ENCODE measurements at regions of chr2 and their contacts with region 1.

Region 1: DNA sequence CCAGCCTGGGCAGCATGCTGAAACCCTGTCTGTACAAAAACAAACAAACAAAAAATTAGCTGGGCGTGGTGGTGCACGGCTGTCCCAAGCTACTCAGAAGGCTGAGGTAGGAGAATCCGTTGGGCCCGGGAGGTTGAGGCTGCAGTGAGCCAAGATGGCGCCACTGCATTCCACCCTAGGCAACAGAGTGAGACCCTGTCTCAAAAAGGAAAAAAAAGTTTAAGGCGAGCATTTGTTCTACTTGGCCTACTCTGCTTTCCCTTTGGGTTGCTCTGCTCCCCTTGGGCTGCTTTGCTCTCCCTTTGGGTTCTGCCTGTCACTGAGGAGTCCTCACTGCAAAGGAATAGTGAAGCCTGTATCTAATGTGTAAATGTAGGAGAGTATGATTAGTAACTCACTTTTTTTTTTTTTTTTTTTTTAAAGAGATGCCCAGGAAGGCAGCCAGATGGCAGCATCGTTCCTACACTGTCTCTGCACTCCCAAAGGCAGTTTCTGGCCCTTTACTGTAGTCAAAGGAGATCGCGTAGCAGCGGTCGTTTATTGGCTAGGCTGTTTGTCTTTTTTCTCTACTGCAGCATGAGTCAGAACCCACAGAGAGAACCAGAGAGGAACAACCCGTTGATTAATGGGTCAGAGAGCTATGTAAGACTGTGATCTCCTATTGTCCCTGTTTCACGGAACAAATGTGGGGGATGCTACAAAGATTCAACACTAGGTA is 118.3 kb upstream of the CWC22 start:
- DNase-seq: peak; percentile 57
- H3K4me3 ChIP-seq: no peak overlapping the region
- H3K27ac ChIP-seq: no peak overlapping the region
- H3K4me1 ChIP-seq: peaks cover 0 to 9% (median 2%) of the 10 kb centered on the region in 4 donors
- H3K27me3 ChIP-seq: peaks cover 8% of the 10 kb centered on the region
- CTCF ChIP-seq: peak; percentile 35 to 62 (median 53)
- EP300 ChIP-seq: no peak
- POLR2A ChIP-seq: no peak

Region 2: DNA sequence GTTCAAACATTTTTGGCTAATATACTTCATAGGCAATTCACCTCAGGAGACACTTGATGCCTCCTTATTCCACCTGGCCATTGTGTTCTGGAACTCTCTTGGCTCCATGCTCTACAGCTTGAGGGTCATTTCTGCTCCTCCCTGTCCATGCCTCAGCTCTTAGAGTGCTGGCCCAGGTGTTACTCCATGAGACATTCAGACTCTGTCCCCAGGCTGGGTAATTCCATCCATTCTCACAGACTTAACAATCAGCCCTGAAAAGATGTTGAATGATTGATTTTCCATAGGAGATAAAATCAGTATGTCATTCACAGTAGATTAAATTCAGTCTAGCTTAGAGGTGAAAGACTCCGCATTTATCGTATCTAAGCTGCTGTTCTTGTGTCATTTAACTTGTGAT is 50.3 kb after region 1 on chr2:
- in situ Hi-C with region 1: no loop called
- intact Hi-C with region 1: no loop called
- DNase-seq: no peak
- H3K4me3 ChIP-seq: no peak overlapping the region
- H3K27ac ChIP-seq: no peak overlapping the region
- H3K4me1 ChIP-seq: no peaks in the 10 kb centered on the region
- H3K27me3 ChIP-seq: no peaks in the 10 kb centered on the region
- CTCF ChIP-seq: no peak
- EP300 ChIP-seq: no peak
- POLR2A ChIP-seq: no peak

Region 3: DNA sequence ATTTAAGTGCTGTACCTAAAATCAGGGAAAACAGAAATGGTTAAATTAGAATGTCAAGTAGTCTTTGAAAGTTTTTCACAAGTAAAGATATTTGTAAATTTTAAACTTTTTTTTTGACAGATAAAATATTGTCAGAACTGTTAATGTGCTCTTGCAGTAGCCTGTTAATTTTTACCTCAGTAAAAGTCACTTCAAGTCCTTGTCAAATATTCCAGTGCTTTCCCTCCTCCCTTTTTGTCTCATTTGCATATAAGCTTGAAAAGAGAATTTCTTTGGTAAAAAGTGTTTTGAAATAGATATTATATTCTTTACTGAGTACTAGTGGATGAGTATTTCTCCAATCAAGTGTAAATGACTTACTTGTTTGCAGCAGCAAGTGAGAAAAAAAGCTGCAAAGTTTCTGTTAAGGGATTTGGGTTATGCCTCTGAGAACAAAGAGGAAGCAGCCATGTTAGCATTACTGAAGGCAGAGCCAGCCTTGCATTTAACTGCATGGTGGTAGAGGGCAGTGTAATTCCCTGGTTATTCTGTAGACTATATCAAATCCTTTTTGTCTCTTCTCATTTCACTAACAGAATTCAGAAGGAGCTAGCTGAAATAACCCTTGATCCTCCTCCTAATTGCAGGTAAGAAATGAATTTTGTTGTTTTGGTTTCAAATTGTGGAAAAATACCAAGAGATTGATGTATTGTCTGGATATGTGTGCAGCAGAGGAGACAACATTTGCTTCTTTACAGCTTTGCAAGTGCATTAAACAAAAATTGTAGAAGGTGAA is 858.3 kb after region 1 on chr2:
- in situ Hi-C with region 1: no loop called
- intact Hi-C with region 1: loop called (anchors 10 kb)
- DNase-seq: peak; percentile 31
- H3K4me3 ChIP-seq: peak overlapping the region in 2 of 4 donors; percentile 3 to 4
- H3K27ac ChIP-seq: peak overlapping the region in 3 of 4 donors; percentile 25 to 59 (median 40)
- H3K4me1 ChIP-seq: peaks cover 14 to 51% (median 30%) of the 10 kb centered on the region in 4 donors
- H3K27me3 ChIP-seq: no peaks in the 10 kb centered on the region
- CTCF ChIP-seq: peak in 1 of 5 experiments; percentile 24
- EP300 ChIP-seq: no peak
- POLR2A ChIP-seq: no peak

Region 4: GRCh38 chr2:181058378-181059269 is 933.2 kb after region 1 on chr2:
- in situ Hi-C with region 1: loop called (anchors 10 to 25 kb)
- intact Hi-C with region 1: no loop called
- DNase-seq: peak; percentile 15
- H3K4me3 ChIP-seq: no peak overlapping the region
- H3K27ac ChIP-seq: no peak overlapping the region
- H3K4me1 ChIP-seq: no peaks in the 10 kb centered on the region
- H3K27me3 ChIP-seq: no peaks in the 10 kb centered on the region
- CTCF ChIP-seq: peak; percentile 49 to 70 (median 60)
- EP300 ChIP-seq: no peak
- POLR2A ChIP-seq: no peak

Region 5: DNA sequence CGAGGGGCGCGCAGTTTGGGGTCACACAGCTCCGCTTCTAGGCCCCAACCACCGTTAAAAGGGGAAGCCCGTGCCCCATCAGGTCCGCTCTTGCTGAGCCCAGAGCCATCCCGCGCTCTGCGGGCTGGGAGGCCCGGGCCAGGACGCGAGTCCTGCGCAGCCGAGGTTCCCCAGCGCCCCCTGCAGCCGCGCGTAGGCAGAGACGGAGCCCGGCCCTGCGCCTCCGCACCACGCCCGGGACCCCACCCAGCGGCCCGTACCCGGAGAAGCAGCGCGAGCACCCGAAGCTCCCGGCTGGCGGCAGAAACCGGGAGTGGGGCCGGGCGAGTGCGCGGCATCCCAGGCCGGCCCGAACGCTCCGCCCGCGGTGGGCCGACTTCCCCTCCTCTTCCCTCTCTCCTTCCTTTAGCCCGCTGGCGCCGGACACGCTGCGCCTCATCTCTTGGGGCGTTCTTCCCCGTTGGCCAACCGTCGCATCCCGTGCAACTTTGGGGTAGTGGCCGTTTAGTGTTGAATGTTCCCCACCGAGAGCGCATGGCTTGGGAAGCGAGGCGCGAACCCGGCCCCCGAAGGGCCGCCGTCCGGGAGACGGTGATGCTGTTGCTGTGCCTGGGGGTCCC is 1331.8 kb after region 1 on chr2 and contains the start of gene ITGA4:
- in situ Hi-C with region 1: loop called in 2 of 4 experiments (anchors 10 to 25 kb)
- intact Hi-C with region 1: no loop called
- DNase-seq: peak; percentile 85
- H3K4me3 ChIP-seq: peak within 1 kb of the TSS; percentile 33 to 57 (median 50)
- H3K27ac ChIP-seq: peak within 1 kb of the TSS; percentile 68 to 86 (median 80)
- H3K4me1 ChIP-seq: peaks cover 0 to 15% (median 8%) of the 10 kb centered on the region in 4 donors
- H3K27me3 ChIP-seq: peaks cover 13% of the 10 kb centered on the region
- CTCF ChIP-seq: peak; percentile 49 to 71 (median 62)
- EP300 ChIP-seq: no peak
- POLR2A ChIP-seq: peak; percentile 6
- total RNA-seq, gene ITGA4: 1.1 to 30.8 (median 5.1) TPM

Region 6: GRCh38 chr2:181466661-181467576 is 1341.5 kb after region 1 on chr2:
- in situ Hi-C with region 1: loop called in 2 of 4 experiments (anchors 10 to 25 kb)
- intact Hi-C with region 1: no loop called
- DNase-seq: peak; percentile 80
- H3K4me3 ChIP-seq: no peak overlapping the region
- H3K27ac ChIP-seq: no peak overlapping the region
- H3K4me1 ChIP-seq: peaks cover 0 to 13% (median 0%) of the 10 kb centered on the region in 4 donors
- H3K27me3 ChIP-seq: no peaks in the 10 kb centered on the region
- CTCF ChIP-seq: peak; percentile 68 to 83 (median 76)
- EP300 ChIP-seq: no peak
- POLR2A ChIP-seq: no peak

Region 7: GRCh38 chr2:181483876-181484275 is 1358.5 kb after region 1 on chr2:
- in situ Hi-C with region 1: loop called in 1 of 4 experiments (anchors 25 kb)
- intact Hi-C with region 1: no loop called
- DNase-seq: no peak
- H3K4me3 ChIP-seq: no peak overlapping the region
- H3K27ac ChIP-seq: no peak overlapping the region
- H3K4me1 ChIP-seq: no peaks in the 10 kb centered on the region
- H3K27me3 ChIP-seq: no peaks in the 10 kb centered on the region
- CTCF ChIP-seq: no peak
- EP300 ChIP-seq: no peak
- POLR2A ChIP-seq: no peak

Region 8: GRCh38 chr2:181715033-181715630 is 1589.7 kb after region 1 on chr2:
- in situ Hi-C with region 1: loop called (anchors 25 kb)
- intact Hi-C with region 1: loop called (anchors 10 kb)
- DNase-seq: peak; percentile 60
- H3K4me3 ChIP-seq: no peak overlapping the region
- H3K27ac ChIP-seq: no peak overlapping the region
- H3K4me1 ChIP-seq: no peaks in the 10 kb centered on the region
- H3K27me3 ChIP-seq: no peaks in the 10 kb centered on the region
- CTCF ChIP-seq: peak; percentile 56 to 68 (median 59)
- EP300 ChIP-seq: no peak
- POLR2A ChIP-seq: no peak

Measured in transverse colon (tissue), 4 donors.